Activated CD8-positive, alpha-beta T cell treated with anti-CD3 and anti-CD28 coated beads for 36 hours (primary cell): ENCODE measurements at regions of chr2 and their contacts with region 1.

Region 1: DNA sequence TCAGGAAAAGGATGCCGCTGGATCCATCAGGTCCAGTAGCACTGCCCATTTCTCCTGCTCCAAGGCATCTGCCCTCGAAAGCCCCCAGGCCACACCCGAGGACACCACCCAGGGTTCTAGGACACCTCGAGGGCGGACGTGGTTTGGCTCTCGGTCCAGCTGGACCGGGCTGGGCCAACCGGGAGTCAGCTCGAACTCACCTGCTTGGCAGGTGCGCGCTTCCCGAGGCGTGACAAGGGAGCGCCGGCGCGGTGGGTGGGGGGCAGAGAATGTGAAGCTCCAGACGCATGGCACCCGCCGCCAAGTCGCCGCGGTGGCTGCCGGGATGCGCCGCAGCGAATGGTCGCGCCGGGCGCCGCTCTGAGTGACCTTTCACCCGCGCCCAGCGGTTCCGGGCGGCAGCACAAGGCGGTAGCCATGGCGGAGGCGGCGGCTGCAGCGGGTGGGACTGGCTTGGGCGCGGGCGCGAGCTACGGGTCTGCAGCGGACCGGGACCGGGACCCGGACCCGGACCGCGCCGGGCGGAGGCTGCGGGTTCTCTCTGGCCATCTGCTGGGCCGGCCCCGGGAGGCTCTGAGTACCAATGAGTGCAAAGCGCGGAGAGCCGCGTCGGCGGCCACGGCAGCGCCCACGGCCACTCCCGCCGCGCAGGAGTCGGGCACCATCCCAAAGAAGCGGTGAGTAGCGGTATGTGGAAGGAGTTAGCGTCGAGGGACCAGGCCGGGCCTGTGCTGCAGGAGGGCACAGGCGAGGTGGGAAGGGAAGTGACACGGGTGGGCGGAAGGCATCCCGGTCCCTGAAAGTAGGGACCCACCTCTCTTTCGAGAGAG is at the start of gene AGPS:
- DNase-seq: peak; percentile 88
- ATAC-seq: peak; percentile 96
- H3K4me3 Mint-ChIP-seq: peak within 1 kb of the TSS; percentile 95
- H3K27ac Mint-ChIP-seq: peak within 1 kb of the TSS; percentile 89
- H3K4me1 Mint-ChIP-seq: peaks cover 51% of the 10 kb centered on the region
- H3K27me3 Mint-ChIP-seq: no peaks in the 10 kb centered on the region
- CTCF ChIP-seq: peak; percentile 43
- total RNA-seq, gene AGPS: 55.7 to 58.9 TPM

Region 2: GRCh38 chr2:177405029-177405692 is 12.6 kb after region 1 on chr2:
- CTCF ChIA-PET with region 1: interaction called, 29 read pairs
- POLR2A ChIA-PET with region 1: interaction called, 15 read pairs
- intact Hi-C with region 1: no loop called
- DNase-seq: no peak
- ATAC-seq: no peak
- H3K4me3 Mint-ChIP-seq: no peak overlapping the region
- H3K27ac Mint-ChIP-seq: no peak overlapping the region
- H3K4me1 Mint-ChIP-seq: peaks cover 59% of the 10 kb centered on the region
- H3K27me3 Mint-ChIP-seq: no peaks in the 10 kb centered on the region
- CTCF ChIP-seq: no peak

Region 3: DNA sequence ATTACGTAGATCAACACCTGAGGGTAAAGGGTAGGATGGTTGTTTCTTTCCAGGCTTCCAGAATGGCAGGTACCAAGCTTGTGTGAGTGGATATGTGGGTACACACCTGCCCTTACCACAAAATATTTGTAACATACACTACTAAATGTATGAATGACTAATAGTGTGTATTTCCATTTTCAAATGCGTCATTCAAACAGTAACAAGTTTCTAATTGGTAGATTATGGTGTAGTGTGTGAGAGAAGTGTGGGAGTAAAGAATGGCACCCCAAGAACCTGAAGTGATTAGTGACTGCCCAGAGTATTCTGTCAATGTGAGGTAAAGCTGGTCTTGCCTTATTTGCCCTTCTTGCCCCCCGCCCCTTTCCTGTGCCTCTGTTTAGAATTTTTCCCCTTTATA is 21.1 kb after region 1 on chr2:
- CTCF ChIA-PET with region 1: interaction called, 15 read pairs
- POLR2A ChIA-PET with region 1: interaction called, 3 read pairs
- intact Hi-C with region 1: no loop called
- DNase-seq: no peak
- ATAC-seq: peak; percentile 75
- H3K4me3 Mint-ChIP-seq: no peak overlapping the region
- H3K27ac Mint-ChIP-seq: peak overlapping the region; percentile 64
- H3K4me1 Mint-ChIP-seq: peaks cover 44% of the 10 kb centered on the region
- H3K27me3 Mint-ChIP-seq: no peaks in the 10 kb centered on the region
- CTCF ChIP-seq: no peak

Region 4: DNA sequence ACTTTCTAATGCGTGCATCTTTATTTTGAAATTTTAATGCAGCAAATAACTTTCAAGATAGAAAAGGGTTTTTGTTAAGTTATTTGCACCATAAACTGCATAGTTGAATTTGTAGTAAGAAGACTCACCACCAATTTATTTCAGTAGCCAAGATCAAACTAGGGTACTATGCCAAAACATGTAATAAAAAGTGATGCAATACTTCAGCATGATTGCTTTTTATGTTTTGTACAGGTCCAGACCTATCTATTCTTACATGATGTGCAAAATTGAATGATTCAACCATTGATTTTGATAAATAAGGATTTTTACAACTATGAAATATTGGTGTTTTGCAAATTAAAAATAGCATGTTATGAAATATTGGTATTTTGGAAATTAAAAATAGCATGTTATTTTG is 26.7 kb after region 1 on chr2:
- CTCF ChIA-PET with region 1: interaction called, 15 read pairs
- POLR2A ChIA-PET with region 1: interaction called, 6 read pairs
- intact Hi-C with region 1: no loop called
- DNase-seq: no peak
- ATAC-seq: no peak
- H3K4me3 Mint-ChIP-seq: no peak overlapping the region
- H3K27ac Mint-ChIP-seq: peak overlapping the region; percentile 68
- H3K4me1 Mint-ChIP-seq: peaks cover 35% of the 10 kb centered on the region
- H3K27me3 Mint-ChIP-seq: no peaks in the 10 kb centered on the region
- CTCF ChIP-seq: no peak

Region 5: GRCh38 chr2:177445200-177445599 is 52.6 kb after region 1 on chr2:
- CTCF ChIA-PET with region 1: no interaction called
- POLR2A ChIA-PET with region 1: no interaction called
- intact Hi-C with region 1: no loop called
- DNase-seq: no peak
- ATAC-seq: no peak
- H3K4me3 Mint-ChIP-seq: no peak overlapping the region
- H3K27ac Mint-ChIP-seq: no peak overlapping the region
- H3K4me1 Mint-ChIP-seq: no peaks in the 10 kb centered on the region
- H3K27me3 Mint-ChIP-seq: no peaks in the 10 kb centered on the region
- CTCF ChIP-seq: no peak